Panc1 (cell line): ENCODE measurements at regions of chr12 and their contacts with region 1.

Region 1: DNA sequence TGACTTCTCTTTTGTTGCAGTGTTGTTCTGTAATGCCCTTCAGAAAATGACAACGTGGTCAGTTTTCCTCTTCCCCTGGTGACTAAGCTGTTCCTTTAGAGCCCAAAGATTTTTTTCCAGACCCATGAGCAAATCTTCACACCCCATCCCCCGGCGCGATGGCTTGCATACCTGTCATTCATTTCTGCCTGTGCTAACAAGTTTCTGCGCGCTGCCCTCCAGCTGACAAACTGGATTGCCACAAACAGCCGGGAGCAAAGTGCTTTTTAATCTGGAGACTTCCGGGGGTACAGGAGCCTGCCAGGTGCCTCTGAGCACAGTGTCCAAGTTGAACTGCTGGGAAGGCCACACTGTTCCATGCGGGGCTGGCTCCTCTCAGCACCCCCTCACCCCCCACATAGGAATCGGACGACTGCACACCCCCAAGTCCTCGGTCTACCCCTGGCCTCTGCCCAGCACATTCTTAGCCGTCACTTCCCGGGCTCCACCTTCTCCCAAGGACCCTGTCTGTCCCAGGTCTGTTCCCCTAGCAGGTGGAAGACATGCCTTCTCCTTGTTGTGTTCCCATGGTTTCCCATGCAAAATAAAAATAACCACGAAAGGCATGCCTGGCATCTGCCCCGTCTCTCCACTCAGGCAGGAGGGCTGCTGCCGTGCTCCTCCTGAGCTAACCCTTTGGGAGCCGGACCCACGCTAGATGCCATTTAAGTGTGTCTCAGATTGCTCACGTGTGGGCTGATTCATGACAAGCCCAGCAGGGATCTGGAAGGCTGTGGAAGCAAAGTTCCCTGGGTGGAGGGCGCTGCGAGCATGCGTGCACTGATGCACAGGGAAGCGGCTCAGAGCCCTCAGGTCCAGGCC is 14.1 kb downstream of the RILPL1 start:
- DNase-seq: no peak
- ATAC-seq: peak; percentile 47; the same call in 1 of the 2 replicates
- H3K4me3 ChIP-seq: no peak overlapping the region
- H3K27ac ChIP-seq: no peak overlapping the region
- H3K4me1 ChIP-seq: peaks cover 4% of the 10 kb centered on the region; the same call in 1 of the 2 replicates
- H3K27me3 ChIP-seq: no peaks in the 10 kb centered on the region
- CTCF ChIP-seq: no peak

Region 2: DNA sequence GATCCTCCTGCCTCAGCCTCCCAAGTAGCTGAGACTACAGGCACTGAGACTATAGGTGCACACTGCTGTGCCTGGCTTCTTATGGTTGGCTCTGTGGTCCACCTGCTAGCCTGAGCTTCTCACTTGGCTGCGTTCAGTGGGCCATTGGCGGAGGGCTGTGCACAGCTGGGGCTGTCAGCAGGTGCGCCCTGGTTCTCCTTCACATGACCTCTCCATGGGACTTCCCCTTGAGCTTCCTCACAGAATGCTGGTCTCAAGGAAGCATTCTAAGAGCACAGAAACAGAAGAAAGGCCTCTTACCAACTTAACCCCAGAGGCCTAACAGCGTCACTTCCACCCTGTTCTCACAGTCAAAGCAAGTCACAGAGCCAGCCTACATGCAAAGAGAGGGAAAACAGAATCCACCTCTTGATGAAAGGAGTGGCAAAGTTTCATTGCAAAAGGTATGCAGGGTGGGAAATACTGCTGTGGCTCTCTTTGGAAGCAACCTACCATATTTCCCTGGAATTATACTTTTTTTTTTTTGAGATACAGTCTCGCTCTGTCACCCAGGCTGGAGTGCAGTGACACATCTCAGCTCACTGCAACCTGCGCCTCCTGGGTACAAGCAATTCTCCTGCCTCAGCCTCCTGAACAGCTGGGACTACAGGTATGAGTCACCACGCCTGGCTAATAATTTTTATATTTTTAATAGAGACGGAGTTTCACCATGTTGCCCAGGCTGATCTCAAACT is 92.2 kb before region 1 on chr12:
- CTCF ChIA-PET with region 1: no interaction called
- POLR2A ChIA-PET with region 1: no interaction called
- in situ Hi-C with region 1: no loop called
- intact Hi-C with region 1: no loop called
- DNase-seq: no peak
- ATAC-seq: no peak
- H3K4me3 ChIP-seq: no peak overlapping the region
- H3K27ac ChIP-seq: no peak overlapping the region
- H3K4me1 ChIP-seq: no peaks in the 10 kb centered on the region
- H3K27me3 ChIP-seq: no peaks in the 10 kb centered on the region
- CTCF ChIP-seq: no peak

Region 3: GRCh38 chr12:123491056-123491455 is 28.3 kb before region 1 on chr12:
- CTCF ChIA-PET with region 1: no interaction called
- POLR2A ChIA-PET with region 1: interaction called, 11 read pairs
- in situ Hi-C with region 1: no loop called
- intact Hi-C with region 1: no loop called
- DNase-seq: no peak
- ATAC-seq: no peak
- H3K4me3 ChIP-seq: no peak overlapping the region
- H3K27ac ChIP-seq: no peak overlapping the region
- H3K4me1 ChIP-seq: no peaks in the 10 kb centered on the region
- H3K27me3 ChIP-seq: no peaks in the 10 kb centered on the region
- CTCF ChIP-seq: no peak

Region 4: GRCh38 chr12:123533672-123534643 is 14.6 kb after region 1 on chr12 and contains the start of gene RILPL1:
- CTCF ChIA-PET with region 1: no interaction called
- POLR2A ChIA-PET with region 1: interaction called, 15 read pairs
- in situ Hi-C with region 1: no loop called
- intact Hi-C with region 1: no loop called
- DNase-seq: no peak
- ATAC-seq: peak; percentile 85
- H3K4me3 ChIP-seq: peak within 1 kb of the TSS; percentile 72
- H3K27ac ChIP-seq: peak within 1 kb of the TSS; percentile 84
- H3K4me1 ChIP-seq: peaks cover 18% of the 10 kb centered on the region
- H3K27me3 ChIP-seq: no peaks in the 10 kb centered on the region
- CTCF ChIP-seq: peak; percentile 80; the same call in 1 of the 2 replicates
- total RNA-seq, gene RILPL1: 16.2 TPM

Region 5: DNA sequence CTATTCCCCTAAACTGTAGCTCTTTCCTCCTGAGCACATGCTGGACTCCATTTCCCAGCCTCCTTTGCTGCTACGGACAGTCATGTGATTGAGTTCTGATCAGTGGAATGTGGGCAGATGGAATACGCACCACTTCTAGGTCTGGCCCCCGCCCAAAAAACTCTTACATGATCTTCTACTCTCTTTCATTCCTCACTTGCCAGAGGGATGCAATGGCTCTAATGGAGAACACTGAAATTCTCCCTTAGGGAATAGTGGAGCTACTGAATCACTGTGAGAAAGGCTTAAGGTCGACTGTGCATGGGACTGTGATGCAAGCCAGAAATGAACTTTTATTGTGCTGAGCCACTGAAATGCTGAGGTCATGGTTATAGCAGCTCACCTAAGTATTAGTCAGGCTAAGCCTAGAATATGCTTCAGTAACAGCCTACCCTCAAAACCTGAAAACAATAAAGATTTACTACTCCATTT is 52.0 kb after region 1 on chr12:
- CTCF ChIA-PET with region 1: no interaction called
- POLR2A ChIA-PET with region 1: no interaction called
- in situ Hi-C with region 1: no loop called
- intact Hi-C with region 1: no loop called
- DNase-seq: no peak
- ATAC-seq: peak; percentile 82
- H3K4me3 ChIP-seq: peak overlapping the region in 1 of 2 experiments; percentile 19; a peak in 2 of 4 replicates
- H3K27ac ChIP-seq: no peak overlapping the region
- H3K4me1 ChIP-seq: no peaks in the 10 kb centered on the region
- H3K27me3 ChIP-seq: no peaks in the 10 kb centered on the region
- CTCF ChIP-seq: no peak

Region 6: DNA sequence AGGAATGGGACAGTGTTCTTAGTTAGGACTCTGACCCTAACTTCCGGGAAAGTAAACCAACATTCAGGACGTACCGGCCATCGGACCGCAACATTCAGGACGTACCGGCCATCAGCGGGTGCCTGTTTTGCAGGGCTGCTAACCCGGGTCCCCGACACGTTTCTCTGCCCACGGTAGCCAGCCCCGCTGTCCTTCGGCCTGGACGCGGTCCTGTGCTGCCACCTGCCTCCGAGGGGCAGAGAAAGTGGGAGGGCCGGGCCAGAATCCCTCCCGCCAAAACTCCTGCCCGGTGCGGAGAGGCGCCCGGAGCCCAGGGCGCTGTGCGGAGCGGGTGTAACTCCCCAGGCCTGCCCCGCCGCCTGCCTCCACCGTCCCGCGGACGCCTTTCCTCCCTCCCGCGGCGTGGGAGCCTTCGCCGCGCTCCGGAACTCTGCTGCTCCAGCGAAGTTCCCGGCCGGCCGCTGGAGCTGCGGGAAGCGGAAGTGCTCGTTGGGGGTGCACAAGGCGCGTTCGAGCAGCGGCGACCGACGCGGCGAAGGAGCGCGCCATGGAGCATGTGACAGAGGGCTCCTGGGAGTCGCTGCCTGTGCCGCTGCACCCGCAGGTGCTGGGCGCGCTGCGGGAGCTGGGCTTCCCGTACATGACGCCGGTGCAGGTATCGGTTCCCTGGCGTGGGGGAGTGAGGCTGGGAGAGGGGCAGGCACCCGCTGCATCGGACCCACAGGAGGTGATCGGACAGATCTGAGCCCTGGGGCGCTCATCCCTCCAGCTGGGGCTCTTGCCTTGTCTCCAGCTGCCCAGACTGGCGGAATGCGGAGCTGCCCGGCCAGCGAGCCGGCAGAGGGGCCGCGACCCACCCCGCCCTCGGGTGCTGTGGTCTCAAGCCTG is 82.5 kb after region 1 on chr12 and contains the start of gene DDX55:
- CTCF ChIA-PET with region 1: no interaction called
- POLR2A ChIA-PET with region 1: no interaction called
- in situ Hi-C with region 1: no loop called
- intact Hi-C with region 1: no loop called
- DNase-seq: no peak
- ATAC-seq: peak; percentile 96
- H3K4me3 ChIP-seq: peak within 1 kb of the TSS; percentile 95 to 97
- H3K27ac ChIP-seq: peak within 1 kb of the TSS; percentile 95
- H3K4me1 ChIP-seq: peaks cover 7% of the 10 kb centered on the region; the same call in 1 of the 2 replicates
- H3K27me3 ChIP-seq: no peaks in the 10 kb centered on the region
- CTCF ChIP-seq: no peak; the same call in 1 of the 2 replicates
- total RNA-seq, gene DDX55: 46.3 TPM

Region 7: DNA sequence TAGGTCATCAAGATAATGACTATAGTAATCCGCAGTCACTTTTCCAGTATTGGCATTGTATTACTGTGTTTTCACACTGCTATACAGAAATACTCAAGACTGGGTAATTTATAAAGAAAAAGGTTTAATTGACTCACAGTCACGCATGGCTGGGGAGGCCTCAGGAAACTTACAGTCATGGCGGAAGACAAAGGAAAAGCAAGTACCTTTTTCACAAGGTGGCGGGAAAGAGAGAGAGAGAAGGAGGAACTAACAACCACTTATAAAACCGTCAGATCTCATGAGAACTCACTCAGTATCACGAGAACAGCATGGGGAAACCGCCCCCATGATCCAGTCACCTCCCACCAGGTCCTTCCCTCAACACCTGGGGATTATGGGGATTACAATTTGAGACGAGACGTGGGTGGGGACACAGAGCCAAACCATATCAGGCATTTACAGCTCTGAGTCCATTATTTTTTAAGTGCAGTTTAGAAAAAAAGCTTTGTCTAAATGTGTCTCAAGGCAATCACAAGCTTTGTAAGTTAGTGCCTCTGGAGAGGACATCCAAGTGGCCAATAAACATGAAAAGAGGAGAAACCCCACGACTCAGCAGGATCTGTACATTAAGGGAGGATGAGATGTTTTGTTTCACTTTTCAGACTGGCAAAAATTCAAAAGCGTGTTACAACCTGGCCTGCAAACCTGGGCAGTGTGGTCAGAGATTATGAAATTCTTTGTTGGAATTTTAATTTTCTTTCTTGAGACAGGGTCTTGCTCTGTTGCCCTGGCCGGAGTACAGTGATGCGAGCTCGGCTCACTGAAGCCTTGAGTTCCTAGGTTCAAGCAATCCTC is 324.8 kb after region 1 on chr12:
- CTCF ChIA-PET with region 1: no interaction called
- POLR2A ChIA-PET with region 1: no interaction called
- in situ Hi-C with region 1: no loop called
- intact Hi-C with region 1: no loop called
- DNase-seq: no peak
- ATAC-seq: no peak
- H3K4me3 ChIP-seq: no peak overlapping the region
- H3K27ac ChIP-seq: no peak overlapping the region
- H3K4me1 ChIP-seq: no peaks in the 10 kb centered on the region
- H3K27me3 ChIP-seq: no peaks in the 10 kb centered on the region
- CTCF ChIP-seq: no peak